Heart right ventricle (tissue), 16 donors: ENCODE measurements at regions of chr12 and their contacts with region 1.

Region 1: DNA sequence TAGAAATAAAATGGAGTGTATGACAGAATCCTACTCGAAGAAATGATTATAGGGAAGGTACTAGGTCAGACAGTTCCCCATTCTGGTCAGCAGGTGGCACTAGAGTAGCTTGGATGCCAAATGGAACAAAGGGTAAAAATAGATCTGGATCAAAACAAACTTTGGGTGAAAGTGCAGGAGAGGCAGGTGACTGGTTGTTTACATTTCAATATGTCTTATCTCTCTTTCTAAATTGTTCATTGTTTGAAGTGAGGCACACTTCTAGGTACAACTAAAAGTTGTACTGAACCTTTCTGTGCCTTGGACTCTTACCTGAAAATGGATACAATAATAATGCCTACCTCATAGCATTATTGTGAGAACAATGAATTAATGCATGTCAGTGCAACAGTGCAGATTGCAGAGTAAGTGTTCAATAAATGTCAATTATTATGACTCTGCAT is 62.0 kb upstream of the OSBPL8 start:
- DNase-seq: peak in 1 of 2 donors; percentile 69
- ATAC-seq: peak in 7 of 8 donors; percentile 64 to 89 (median 73)
- H3K4me3 ChIP-seq: no peak overlapping the region
- H3K27ac ChIP-seq: no peak overlapping the region
- H3K4me1 ChIP-seq: peaks cover 0 to 10% (median 3%) of the 10 kb centered on the region in 9 donors
- H3K27me3 ChIP-seq: no peaks in the 10 kb centered on the region
- CTCF ChIP-seq: peak; percentile 88 to 99 (median 96)

Region 2: GRCh38 chr12:76784600-76785051 is 163.0 kb after region 1 on chr12:
- intact Hi-C with region 1: loop called in 1 of 10 experiments (anchors 5 kb)
- DNase-seq: peak in 1 of 2 donors; percentile 31
- ATAC-seq: peak in 7 of 8 donors; percentile 29 to 57 (median 48)
- H3K4me3 ChIP-seq: no peak overlapping the region
- H3K27ac ChIP-seq: peak overlapping the region in 8 of 10 donors; percentile 18 to 55 (median 22)
- H3K4me1 ChIP-seq: peaks cover 6 to 82% (median 36%) of the 10 kb centered on the region in 9 donors
- H3K27me3 ChIP-seq: no peaks in the 10 kb centered on the region
- CTCF ChIP-seq: no peak

Region 3: GRCh38 chr12:76790564-76791552 is 169.3 kb after region 1 on chr12:
- intact Hi-C with region 1: loop called (anchors 1 to 5 kb)
- DNase-seq: no peak
- ATAC-seq: peak in 4 of 8 donors; percentile 38 to 60 (median 46)
- H3K4me3 ChIP-seq: no peak overlapping the region
- H3K27ac ChIP-seq: peak overlapping the region in 1 of 10 donors; percentile 20
- H3K4me1 ChIP-seq: peaks cover 0 to 79% (median 25%) of the 10 kb centered on the region in 9 donors
- H3K27me3 ChIP-seq: no peaks in the 10 kb centered on the region
- CTCF ChIP-seq: peak; percentile 64 to 87 (median 72)

Region 4: GRCh38 chr12:76820888-76821482 is 199.4 kb after region 1 on chr12:
- intact Hi-C with region 1: loop called in 1 of 10 experiments (anchors 5 kb)
- DNase-seq: peak in 1 of 2 donors; percentile 11
- ATAC-seq: peak in 2 of 8 donors; percentile 62 to 69
- H3K4me3 ChIP-seq: no peak overlapping the region
- H3K27ac ChIP-seq: no peak overlapping the region
- H3K4me1 ChIP-seq: no peaks in the 10 kb centered on the region
- H3K27me3 ChIP-seq: no peaks in the 10 kb centered on the region
- CTCF ChIP-seq: peak; percentile 13 to 69 (median 52)

Region 5: GRCh38 chr12:76920172-76921014 is 298.8 kb after region 1 on chr12:
- intact Hi-C with region 1: loop called in 2 of 10 experiments (anchors 5 to 10 kb)
- DNase-seq: no peak
- ATAC-seq: no peak
- H3K4me3 ChIP-seq: no peak overlapping the region
- H3K27ac ChIP-seq: no peak overlapping the region
- H3K4me1 ChIP-seq: peaks cover 0 to 10% (median 3%) of the 10 kb centered on the region in 9 donors
- H3K27me3 ChIP-seq: no peaks in the 10 kb centered on the region
- CTCF ChIP-seq: no peak

Region 6: DNA sequence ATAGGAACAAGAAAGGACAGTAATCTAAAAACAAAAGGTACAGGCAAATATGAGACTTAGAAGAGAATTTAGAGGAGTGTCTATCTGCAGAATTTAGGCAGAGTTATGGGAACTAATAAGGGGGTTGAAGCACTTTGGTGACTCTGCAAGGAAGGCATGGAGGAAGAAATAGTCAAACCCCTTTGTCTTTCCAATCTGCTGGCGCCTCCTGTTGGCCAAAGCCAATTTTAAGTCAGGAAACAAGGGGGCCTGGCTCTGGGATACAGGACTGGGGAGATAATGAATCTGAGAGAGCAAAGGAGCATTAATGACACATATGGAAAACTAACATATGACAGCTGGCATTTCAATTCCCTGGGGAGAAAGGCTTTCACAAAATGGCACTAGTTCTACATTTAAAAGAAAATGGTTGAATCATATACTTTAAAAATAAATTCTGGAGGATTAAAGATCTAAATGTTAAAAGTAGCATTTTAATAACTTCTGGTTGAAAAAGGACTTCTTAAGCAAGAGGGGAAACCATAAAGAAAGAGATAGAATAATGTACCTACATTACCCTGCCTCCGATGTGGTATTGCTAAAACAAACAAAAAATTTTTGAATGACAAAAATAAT is 305.7 kb after region 1 on chr12:
- intact Hi-C with region 1: loop called in 2 of 10 experiments (anchors 5 to 10 kb)
- DNase-seq: peak in 1 of 2 donors; percentile 15
- ATAC-seq: no peak
- H3K4me3 ChIP-seq: no peak overlapping the region
- H3K27ac ChIP-seq: no peak overlapping the region
- H3K4me1 ChIP-seq: no peaks in the 10 kb centered on the region
- H3K27me3 ChIP-seq: peaks cover 0 to 4% (median 0%) of the 10 kb centered on the region in 7 donors
- CTCF ChIP-seq: peak in 8 of 9 donors; percentile 19 to 59 (median 49)

Region 7: DNA sequence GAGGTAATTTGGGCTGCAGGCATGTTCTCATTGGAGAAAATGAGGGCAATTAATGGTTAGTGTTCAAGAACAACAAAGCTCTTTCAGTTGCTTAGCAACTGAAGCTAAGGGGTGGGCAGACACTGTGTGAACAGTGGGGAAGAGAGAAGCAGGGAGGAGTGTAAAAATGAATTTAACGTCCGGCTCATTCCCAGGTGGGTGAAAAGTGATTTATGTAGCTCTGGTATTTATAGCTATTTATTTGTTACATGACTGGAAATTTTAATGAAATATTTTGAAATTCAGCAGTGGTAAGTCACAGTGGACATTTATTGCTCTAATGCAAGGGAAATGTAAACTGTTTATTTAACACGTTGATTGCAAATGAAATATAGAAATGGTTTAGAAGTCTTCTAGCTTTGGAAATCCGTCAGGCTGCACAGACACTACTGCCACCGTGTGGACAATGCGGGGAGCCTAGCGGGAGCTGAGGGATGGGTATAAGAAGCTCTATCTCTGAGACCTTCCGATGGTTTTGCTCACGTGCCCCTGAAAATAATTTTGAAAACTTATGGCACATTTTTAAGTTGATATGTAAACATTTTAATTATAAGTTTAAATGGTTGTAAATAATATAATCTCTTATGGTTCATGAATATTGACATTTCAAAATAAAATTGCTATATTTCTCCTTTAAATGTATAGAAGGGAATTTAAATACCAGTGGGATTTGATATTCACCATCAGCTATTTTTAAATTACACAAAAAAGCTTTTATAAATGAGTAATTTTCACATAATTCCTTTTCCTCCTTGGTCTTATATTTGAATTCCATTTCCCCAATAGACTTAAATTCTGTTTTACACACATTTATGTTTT is 389.3 kb after region 1 on chr12:
- intact Hi-C with region 1: loop called (anchors 1 to 10 kb)
- DNase-seq: peak; percentile 67 to 68
- ATAC-seq: peak in 5 of 8 donors; percentile 46 to 75 (median 70)
- H3K4me3 ChIP-seq: peak overlapping the region in 2 of 10 donors; percentile 18 to 29
- H3K27ac ChIP-seq: no peak overlapping the region
- H3K4me1 ChIP-seq: peaks cover 0 to 7% (median 0%) of the 10 kb centered on the region in 9 donors
- H3K27me3 ChIP-seq: peaks cover 0 to 11% (median 0%) of the 10 kb centered on the region in 7 donors
- CTCF ChIP-seq: peak; percentile 84 to 99 (median 95)